ENCODE measurements at regions of chr19 and their contacts with region 1.

Region 1: DNA sequence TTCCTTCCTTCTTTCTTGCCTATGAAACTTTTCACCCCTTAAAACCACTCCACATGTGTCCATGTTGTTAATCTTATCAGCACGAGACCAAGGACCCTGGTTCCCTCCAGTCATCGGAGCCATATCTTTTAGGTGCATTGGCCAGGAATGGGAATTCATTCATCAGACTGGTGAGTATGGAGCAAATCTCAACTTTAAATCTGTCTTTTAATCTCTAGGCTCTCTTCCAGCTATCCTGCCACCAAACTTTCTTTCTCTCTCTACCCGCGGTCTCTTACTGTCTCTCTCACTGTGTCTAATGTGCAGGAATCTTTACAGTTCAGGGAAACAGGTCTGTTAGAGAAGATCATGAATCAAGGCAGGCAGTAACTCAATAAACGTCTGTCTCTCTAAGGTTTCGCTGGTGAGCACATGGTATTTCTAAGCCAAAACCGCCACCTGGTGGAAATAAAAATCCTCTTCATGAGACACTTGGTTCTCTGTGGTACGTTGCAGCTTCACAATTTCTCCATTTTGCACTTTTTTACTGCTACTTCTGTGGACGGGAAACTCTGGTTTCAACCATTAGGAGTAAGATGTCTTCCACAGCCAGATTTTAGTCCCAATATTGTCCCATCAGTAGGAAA is 16.1 kb downstream of the LGALS16 start:
- DNase-seq: no peak
- H3K4me3 ChIP-seq: no peak overlapping the region
- CTCF ChIP-seq: peak; percentile 39

Region 2: GRCh38 chr19:39554701-39555311 is 117.0 kb before region 1 on chr19:
- CTCF ChIA-PET with region 1: interaction called, 58 read pairs
- POLR2A ChIA-PET with region 1: no interaction called
- DNase-seq: no peak
- H3K4me3 ChIP-seq: no peak overlapping the region
- CTCF ChIP-seq: no peak

Region 3: GRCh38 chr19:39759457-39760184 is 87.8 kb after region 1 on chr19:
- CTCF ChIA-PET with region 1: no interaction called
- POLR2A ChIA-PET with region 1: no interaction called
- DNase-seq: no peak
- H3K4me3 ChIP-seq: no peak overlapping the region
- CTCF ChIP-seq: no peak